Activated CD4-positive, alpha-beta T cell treated with anti-CD3 and anti-CD28 coated beads for 36 hours (primary cell): ENCODE measurements at regions of chr16 and their contacts with region 1.

Region 1: DNA sequence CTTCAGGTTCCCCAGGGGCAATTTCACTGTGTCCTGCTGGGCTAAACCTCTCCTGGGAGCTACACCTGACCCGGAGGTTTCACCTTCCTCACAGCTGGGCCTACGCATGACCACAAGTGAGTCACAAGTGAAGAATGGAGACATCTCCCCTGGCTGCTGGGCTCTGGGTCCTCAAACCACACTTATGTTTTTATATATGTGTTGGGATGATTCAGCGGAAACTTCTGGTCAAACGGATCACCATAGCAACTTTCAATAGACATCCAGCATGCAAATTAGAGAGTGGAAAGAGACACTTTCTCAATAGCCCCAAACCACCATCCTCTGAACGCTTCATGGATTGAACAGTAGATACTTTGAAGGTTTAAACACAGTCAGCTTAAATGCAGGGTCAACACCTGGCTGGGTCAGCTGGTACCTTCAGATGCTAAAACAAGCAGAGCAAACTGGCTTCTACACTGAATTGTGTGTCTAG is 28.0 kb upstream of the MAF start:
- DNase-seq: peak; percentile 86
- ATAC-seq: peak; percentile 94
- H3K4me3 Mint-ChIP-seq: no peak overlapping the region
- H3K27ac Mint-ChIP-seq: peak overlapping the region; percentile 71
- H3K4me1 Mint-ChIP-seq: peaks cover 14% of the 10 kb centered on the region
- H3K27me3 Mint-ChIP-seq: peaks cover 24% of the 10 kb centered on the region

Region 2: DNA sequence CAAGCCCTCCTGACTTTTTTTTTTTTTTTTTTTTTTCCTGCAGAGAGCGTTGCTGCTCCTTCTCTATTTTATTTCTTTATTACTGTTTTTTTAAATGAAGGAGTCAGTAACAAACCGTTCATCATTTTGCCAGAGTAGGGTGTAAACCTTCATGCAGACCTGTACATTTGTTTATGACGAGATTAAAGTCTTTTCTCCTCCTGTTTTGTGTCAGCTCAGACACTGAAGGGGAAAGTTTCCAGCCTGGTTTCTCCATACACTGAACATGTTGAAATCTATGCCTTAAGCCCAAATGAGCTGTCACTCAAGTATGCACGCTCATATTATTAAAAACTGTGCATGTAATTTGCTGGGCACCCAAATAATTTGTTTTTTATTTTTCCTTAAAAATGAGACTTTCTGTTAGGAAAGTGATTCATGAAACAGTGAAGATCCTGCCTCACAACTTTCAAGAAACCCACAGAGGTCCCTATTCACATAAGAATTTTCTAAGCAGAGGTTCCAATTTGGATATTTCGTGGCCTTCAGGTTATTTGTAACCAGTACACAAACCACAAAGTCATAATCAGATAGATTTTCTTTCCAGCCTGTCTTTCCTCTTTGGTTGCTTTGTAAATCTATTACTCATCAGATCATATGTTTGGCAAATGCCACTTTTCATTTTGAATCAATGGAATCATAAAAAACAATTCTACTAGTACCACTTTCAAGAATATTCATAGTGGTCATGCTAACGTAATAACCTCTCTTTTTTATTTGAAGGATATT is 728.3 kb before region 1 on chr16:
- CTCF ChIA-PET with region 1: no interaction called
- POLR2A ChIA-PET with region 1: no interaction called
- intact Hi-C with region 1: loop called in 1 of 2 experiments (anchors 2 kb)
- DNase-seq: no peak
- ATAC-seq: peak; percentile 55
- H3K4me3 Mint-ChIP-seq: no peak overlapping the region
- H3K27ac Mint-ChIP-seq: peak overlapping the region; percentile 80
- H3K4me1 Mint-ChIP-seq: peaks cover 52% of the 10 kb centered on the region
- H3K27me3 Mint-ChIP-seq: no peaks in the 10 kb centered on the region

Region 3: DNA sequence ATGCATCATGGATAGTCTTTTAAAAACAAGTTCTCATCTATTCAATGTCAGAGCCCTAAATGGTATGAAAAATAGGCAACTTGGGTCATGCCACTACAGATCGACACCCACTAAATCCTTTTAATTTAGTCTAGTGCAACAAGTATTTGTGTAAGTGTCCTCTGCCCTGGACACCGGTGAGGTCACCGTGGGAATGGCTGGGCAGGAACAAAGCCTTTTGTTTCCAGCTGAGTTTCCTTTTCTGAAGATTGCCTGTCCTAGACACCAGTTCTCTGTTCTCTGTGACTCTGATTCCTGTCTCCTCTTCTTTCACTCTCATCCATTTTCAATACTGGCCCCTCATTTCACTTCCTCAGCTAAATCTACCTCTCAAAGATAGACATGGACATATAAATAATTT is 474.5 kb before region 1 on chr16:
- CTCF ChIA-PET with region 1: no interaction called
- POLR2A ChIA-PET with region 1: no interaction called
- intact Hi-C with region 1: no loop called
- DNase-seq: no peak
- ATAC-seq: no peak
- H3K4me3 Mint-ChIP-seq: no peak overlapping the region
- H3K27ac Mint-ChIP-seq: no peak overlapping the region
- H3K4me1 Mint-ChIP-seq: peaks cover 33% of the 10 kb centered on the region
- H3K27me3 Mint-ChIP-seq: peaks cover 5% of the 10 kb centered on the region

Region 4: GRCh38 chr16:79571065-79571902 is 57.3 kb before region 1 on chr16:
- CTCF ChIA-PET with region 1: no interaction called
- POLR2A ChIA-PET with region 1: no interaction called
- intact Hi-C with region 1: no loop called
- DNase-seq: no peak
- ATAC-seq: no peak
- H3K4me3 Mint-ChIP-seq: no peak overlapping the region
- H3K27ac Mint-ChIP-seq: no peak overlapping the region
- H3K4me1 Mint-ChIP-seq: no peaks in the 10 kb centered on the region
- H3K27me3 Mint-ChIP-seq: peaks cover 8% of the 10 kb centered on the region

Region 5: DNA sequence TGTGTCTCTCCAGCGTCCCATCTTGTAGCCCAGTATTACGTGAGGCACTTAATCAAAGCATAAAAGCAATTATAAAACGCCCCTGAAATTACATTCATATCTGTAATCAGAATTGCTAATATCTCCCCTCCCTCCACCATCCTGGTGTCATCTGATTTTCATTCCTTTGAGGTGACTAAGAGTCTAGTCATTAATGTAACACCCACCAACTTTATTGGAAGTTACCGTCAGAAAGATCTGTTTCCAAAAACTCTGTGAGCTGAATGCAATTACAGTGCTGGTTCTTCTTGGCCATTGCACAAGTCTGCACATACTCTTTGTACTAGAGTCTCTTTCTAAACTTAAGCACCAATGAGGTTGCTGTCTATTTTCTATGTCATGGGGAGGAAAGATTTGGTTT is 15.5 kb before region 1 on chr16:
- CTCF ChIA-PET with region 1: no interaction called
- POLR2A ChIA-PET with region 1: no interaction called
- intact Hi-C with region 1: loop called in 1 of 2 experiments (anchors 1 kb)
- DNase-seq: no peak
- ATAC-seq: peak; percentile 75
- H3K4me3 Mint-ChIP-seq: no peak overlapping the region
- H3K27ac Mint-ChIP-seq: no peak overlapping the region
- H3K4me1 Mint-ChIP-seq: peaks cover 21% of the 10 kb centered on the region
- H3K27me3 Mint-ChIP-seq: peaks cover 10% of the 10 kb centered on the region

Region 6: DNA sequence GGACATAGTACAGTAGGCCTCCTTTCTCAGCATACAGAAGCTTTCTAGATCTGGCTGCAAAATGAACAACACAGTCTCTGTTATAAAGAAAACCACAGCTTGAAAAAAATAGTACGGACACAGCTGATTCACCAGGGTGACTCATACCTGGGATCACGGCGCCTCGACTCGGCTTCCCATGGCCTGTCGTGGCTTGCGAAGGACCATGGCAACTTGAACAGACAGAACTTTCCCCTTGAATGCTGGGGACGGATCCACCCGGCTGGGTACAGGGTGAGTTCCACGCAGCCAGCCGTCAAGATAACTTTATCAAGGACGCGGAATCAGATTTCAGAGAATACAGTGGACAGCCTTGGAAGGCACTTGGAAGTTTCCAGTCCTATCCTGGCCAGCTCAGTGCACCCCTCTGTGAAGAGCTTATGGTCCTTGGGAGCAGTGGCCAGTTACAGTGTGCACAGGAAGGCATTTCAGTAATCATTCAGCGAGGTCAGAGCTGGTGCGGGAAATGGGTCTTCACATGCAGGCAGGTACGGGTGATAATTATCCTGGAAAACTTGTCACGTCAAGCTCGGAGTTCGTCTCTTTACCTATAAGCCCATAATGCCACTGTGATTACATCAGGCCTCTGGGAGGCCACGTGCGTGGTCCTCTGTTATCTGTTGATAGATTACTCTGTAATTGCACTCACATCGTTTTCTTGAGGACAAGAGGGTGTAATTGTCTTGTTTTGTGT is 29.9 kb after region 1 on chr16:
- CTCF ChIA-PET with region 1: no interaction called
- POLR2A ChIA-PET with region 1: no interaction called
- intact Hi-C with region 1: no loop called
- DNase-seq: peak; percentile 18
- ATAC-seq: peak; percentile 36
- H3K4me3 Mint-ChIP-seq: no peak overlapping the region
- H3K27ac Mint-ChIP-seq: no peak overlapping the region
- H3K4me1 Mint-ChIP-seq: no peaks in the 10 kb centered on the region
- H3K27me3 Mint-ChIP-seq: peaks cover 2% of the 10 kb centered on the region

Region 7: GRCh38 chr16:79758615-79759341 is 130.2 kb after region 1 on chr16:
- CTCF ChIA-PET with region 1: no interaction called
- POLR2A ChIA-PET with region 1: no interaction called
- intact Hi-C with region 1: loop called in 1 of 2 experiments (anchors 5 kb)
- DNase-seq: no peak
- ATAC-seq: no peak
- H3K4me3 Mint-ChIP-seq: no peak overlapping the region
- H3K27ac Mint-ChIP-seq: no peak overlapping the region
- H3K4me1 Mint-ChIP-seq: peaks cover 37% of the 10 kb centered on the region
- H3K27me3 Mint-ChIP-seq: peaks cover 9% of the 10 kb centered on the region

Region 8: GRCh38 chr16:80197741-80198201 is 569.2 kb after region 1 on chr16:
- CTCF ChIA-PET with region 1: no interaction called
- POLR2A ChIA-PET with region 1: no interaction called
- intact Hi-C with region 1: loop called in 1 of 2 experiments (anchors 5 kb)
- DNase-seq: peak; percentile 10
- ATAC-seq: peak; percentile 94
- H3K4me3 Mint-ChIP-seq: no peak overlapping the region
- H3K27ac Mint-ChIP-seq: peak overlapping the region; percentile 34
- H3K4me1 Mint-ChIP-seq: peaks cover 14% of the 10 kb centered on the region
- H3K27me3 Mint-ChIP-seq: peaks cover 31% of the 10 kb centered on the region